ENCODE measurements at regions of chr5 and their contacts with region 1.

Region 1: GRCh38 chr5:106587-106986 is 14.6 kb downstream of the PLEKHG4B start:
- DNase-seq: no peak
- H3K4me3 ChIP-seq: no peak overlapping the region
- H3K27ac ChIP-seq: 0 out of 2 replicates have a peak overlapping the region, but pooled peaks have one; percentile 42
- H3K4me1 ChIP-seq: peaks cover 1 to 13% (median 6%) of the 10 kb centered on the region in 4 experiments; a peak in 6 of 7 replicates
- H3K27me3 ChIP-seq: no peaks in the 10 kb centered on the region
- CTCF ChIP-seq: peak in 2 of 3 experiments; percentile 27 to 39; a peak in 2 of 4 replicates
- EP300 ChIP-seq: no peak
- POLR2A ChIP-seq: no peak
- RAD21 ChIP-seq: peak in 1 of 2 experiments; percentile 34; a peak in 1 of 4 replicates

Region 2: DNA sequence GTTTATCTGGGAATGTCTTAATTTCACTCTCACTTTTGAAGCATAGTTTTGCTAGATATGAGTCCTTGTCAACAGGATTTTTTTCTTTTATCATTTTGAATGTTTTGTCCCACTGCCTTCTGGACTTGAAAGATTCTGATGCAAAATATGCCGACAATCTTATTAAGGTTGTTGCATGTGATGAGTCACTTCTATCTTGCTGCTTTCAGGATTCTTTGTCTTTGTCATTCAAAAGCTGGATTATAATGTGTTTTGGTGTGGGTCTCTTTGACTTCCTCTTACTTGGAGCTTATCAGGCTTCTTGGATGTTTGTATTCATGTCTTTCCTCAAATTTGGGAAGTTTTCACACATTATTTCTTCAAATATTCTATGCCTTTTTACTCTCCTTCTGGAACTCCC is 19.2 kb after region 1 on chr5:
- CTCF ChIA-PET with region 1: interaction called, 3 read pairs
- POLR2A ChIA-PET with region 1: interaction called, 14 read pairs
- DNase-seq: no peak
- H3K4me3 ChIP-seq: peak overlapping the region in 1 of 4 experiments; percentile 21; a peak in 1 of 8 replicates
- H3K27ac ChIP-seq: no peak overlapping the region; the same call in 1 of the 2 replicates
- H3K4me1 ChIP-seq: peaks cover 0 to 22% (median 9%) of the 10 kb centered on the region in 4 experiments; a peak in 4 of 7 replicates
- H3K27me3 ChIP-seq: no peaks in the 10 kb centered on the region
- CTCF ChIP-seq: no peak
- EP300 ChIP-seq: no peak
- POLR2A ChIP-seq: no peak
- RAD21 ChIP-seq: no peak